Sciatic nerve (tissue), 2 donors: ENCODE measurements at regions of chr11 and their contacts with region 1.

Region 1: GRCh38 chr11:66886671-66887221 is 29.9 kb downstream of the LRFN4 start:
- DNase-seq: no peak
- ATAC-seq: peak; percentile 68

Region 2: DNA sequence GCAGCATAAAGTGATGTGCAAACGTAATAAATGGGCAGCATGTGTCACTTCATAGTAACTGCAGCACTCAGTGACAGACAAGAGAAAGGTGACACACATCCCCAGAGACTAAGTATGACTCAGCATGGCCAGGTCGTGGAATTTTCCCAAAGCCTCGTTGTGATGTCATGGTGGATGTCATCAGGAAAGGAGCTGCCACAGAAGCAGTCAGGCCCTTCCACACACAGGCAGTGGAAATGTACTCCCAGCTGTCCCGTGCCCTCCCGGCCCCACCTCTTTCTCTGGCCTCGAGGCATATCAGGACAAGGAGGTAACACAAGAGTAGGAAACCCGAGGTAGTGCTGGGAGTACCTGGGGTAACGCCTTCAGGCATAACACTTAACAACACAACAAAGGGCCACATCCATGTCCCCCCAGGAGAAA is 63.4 kb after region 1 on chr11:
- intact Hi-C with region 1: loop called (anchors 2 kb)
- DNase-seq: no peak
- ATAC-seq: peak; percentile 27